Adrenal gland (tissue), 19 donors: ENCODE measurements at regions of chr4 and their contacts with region 1.

Region 1: GRCh38 chr4:109702950-109703663 is at the start of gene CASP6:
- DNase-seq: peak; percentile 87 to 92 (median 91)
- H3K4me3 ChIP-seq: peak within 1 kb of the TSS; percentile 39 to 94 (median 68)
- H3K27ac ChIP-seq: peak within 1 kb of the TSS; percentile 21 to 95 (median 80)
- H3K4me1 ChIP-seq: peaks cover 6 to 12% of the 10 kb centered on the region in 2 donors
- H3K27me3 ChIP-seq: no peaks in the 10 kb centered on the region
- CTCF ChIP-seq: peak; percentile 56 to 76 (median 66)
- POLR2A ChIP-seq: peak; percentile 10 to 60
- total RNA-seq, gene CASP6: 7.3 to 21.6 (median 14.9) TPM

Region 2: DNA sequence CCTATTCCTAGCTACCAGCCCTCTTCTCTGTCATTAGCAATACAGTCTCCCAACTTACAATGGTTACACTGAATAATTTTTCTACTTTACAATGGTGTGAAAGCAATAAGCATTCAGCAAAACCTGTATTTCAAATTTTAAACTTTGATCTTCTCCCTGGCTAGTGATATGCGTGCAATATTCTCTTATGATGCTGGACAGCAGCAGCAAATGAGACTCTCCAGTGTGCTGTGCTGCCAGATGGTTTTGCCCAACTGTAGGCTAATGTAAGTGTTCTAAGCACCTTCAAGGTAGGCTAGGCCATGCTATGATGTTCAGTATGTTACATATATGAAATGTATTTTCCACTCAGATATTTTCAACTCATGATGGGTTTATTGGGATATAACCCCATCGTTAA is 106.5 kb after region 1 on chr4:
- intact Hi-C with region 1: loop called in 1 of 2 experiments (anchors 5 kb)
- DNase-seq: no peak
- H3K4me3 ChIP-seq: no peak overlapping the region
- H3K27ac ChIP-seq: no peak overlapping the region
- H3K4me1 ChIP-seq: no peaks in the 10 kb centered on the region
- H3K27me3 ChIP-seq: no peaks in the 10 kb centered on the region
- CTCF ChIP-seq: no peak
- POLR2A ChIP-seq: no peak

Region 3: GRCh38 chr4:109815151-109816081 is 112.3 kb after region 1 on chr4 and contains the start of gene GAR1:
- intact Hi-C with region 1: loop called in 1 of 2 experiments (anchors 5 kb)
- DNase-seq: peak; percentile 87 to 97 (median 93)
- H3K4me3 ChIP-seq: peak within 1 kb of the TSS; percentile 68 to 88 (median 81)
- H3K27ac ChIP-seq: peak within 1 kb of the TSS; percentile 61 to 89 (median 83)
- H3K4me1 ChIP-seq: peaks cover 10 to 20% of the 10 kb centered on the region in 2 donors
- H3K27me3 ChIP-seq: no peaks in the 10 kb centered on the region
- CTCF ChIP-seq: no peak
- POLR2A ChIP-seq: peak; percentile 26 to 81
- total RNA-seq, gene GAR1: 0.97 to 19.3 (median 8.3) TPM

Region 4: DNA sequence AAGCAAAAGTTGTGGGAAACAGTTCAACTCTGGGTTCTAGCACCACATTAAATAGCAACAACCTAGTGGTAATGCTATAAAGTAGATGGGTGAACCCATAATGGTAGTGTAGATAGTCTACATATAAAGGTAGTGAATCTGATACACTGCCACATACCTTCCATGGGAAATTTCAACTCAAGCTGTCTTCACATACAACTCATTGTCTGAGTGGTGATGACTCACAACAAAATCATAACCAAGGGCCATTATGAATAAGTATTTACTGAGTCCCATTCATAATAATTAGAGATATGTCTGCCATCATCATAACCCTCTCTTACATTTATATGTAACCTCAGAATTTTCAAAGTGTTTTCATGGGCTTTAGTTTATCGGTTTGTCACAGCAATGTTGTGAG is 244.3 kb after region 1 on chr4:
- intact Hi-C with region 1: no loop called
- DNase-seq: no peak
- H3K4me3 ChIP-seq: no peak overlapping the region
- H3K27ac ChIP-seq: no peak overlapping the region
- H3K4me1 ChIP-seq: no peaks in the 10 kb centered on the region
- H3K27me3 ChIP-seq: no peaks in the 10 kb centered on the region
- CTCF ChIP-seq: no peak
- POLR2A ChIP-seq: no peak